ENCODE measurements at regions of chr13 and their contacts with region 1.

Region 1: GRCh38 chr13:108895220-108895704 is 265.9 kb downstream of the MYO16 start:
- DNase-seq: peak in 1 of 2 experiments; percentile 56
- ATAC-seq: peak; percentile 43; a peak in 2 of 6 replicates
- H3K4me3 ChIP-seq: no peak overlapping the region
- H3K27ac ChIP-seq: 0 out of 6 replicates have a peak overlapping the region, but pooled peaks of 1 of the 2 experiments have one; percentile 14
- H3K4me1 ChIP-seq: peaks cover 4% of the 10 kb centered on the region; the same call in 1 of the 3 replicates
- CTCF ChIP-seq: peak; percentile 67
- EP300 ChIP-seq: no peak
- POLR2A ChIP-seq: no peak
- RAD21 ChIP-seq: peak; percentile 74 to 83

Region 2: GRCh38 chr13:108322206-108322824 is 572.9 kb before region 1 on chr13:
- CTCF ChIA-PET with region 1: interaction called, 26 read pairs
- POLR2A ChIA-PET with region 1: no interaction called
- DNase-seq: peak; percentile 4 to 27
- ATAC-seq: peak; percentile 77 to 86; a peak in 5 of 6 replicates
- H3K4me3 ChIP-seq: no peak overlapping the region
- H3K27ac ChIP-seq: no peak overlapping the region
- H3K4me1 ChIP-seq: no peaks in the 10 kb centered on the region
- CTCF ChIP-seq: peak; percentile 71
- EP300 ChIP-seq: no peak
- POLR2A ChIP-seq: no peak
- RAD21 ChIP-seq: peak; percentile 67 to 74

Region 3: GRCh38 chr13:108508263-108508662 is 387.0 kb before region 1 on chr13:
- CTCF ChIA-PET with region 1: interaction called, 14 read pairs
- POLR2A ChIA-PET with region 1: no interaction called
- DNase-seq: peak; percentile 10 to 26
- ATAC-seq: peak; percentile 49 to 56; a peak in 1 of 6 replicates
- H3K4me3 ChIP-seq: no peak overlapping the region
- H3K27ac ChIP-seq: no peak overlapping the region
- H3K4me1 ChIP-seq: no peaks in the 10 kb centered on the region
- CTCF ChIP-seq: peak; percentile 48
- EP300 ChIP-seq: no peak
- POLR2A ChIP-seq: no peak
- RAD21 ChIP-seq: peak; percentile 50 to 63

Region 4: DNA sequence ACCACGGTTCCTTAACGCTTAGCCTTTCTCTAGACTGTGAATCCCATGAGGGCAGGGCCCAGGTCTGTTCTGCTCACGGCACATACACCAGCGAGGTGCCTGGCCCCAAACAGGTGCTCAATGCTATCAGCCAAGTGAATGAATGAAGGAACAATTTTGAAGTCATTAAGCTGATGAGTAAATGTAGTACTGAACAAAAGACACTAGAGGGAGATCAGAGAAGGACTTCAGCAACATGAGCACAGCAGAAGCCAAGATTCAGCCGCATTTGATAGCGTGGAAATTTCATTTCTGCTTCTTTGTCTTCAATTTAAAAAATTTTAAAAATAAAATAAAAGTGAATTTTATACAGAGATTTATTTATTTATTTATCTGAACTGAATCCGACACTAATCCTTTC is 285.9 kb before region 1 on chr13:
- CTCF ChIA-PET with region 1: interaction called, 41 read pairs
- POLR2A ChIA-PET with region 1: no interaction called
- DNase-seq: peak; percentile 6 to 31
- ATAC-seq: peak in 1 of 2 experiments; percentile 54; a peak in 2 of 6 replicates
- H3K4me3 ChIP-seq: no peak overlapping the region
- H3K27ac ChIP-seq: no peak overlapping the region
- H3K4me1 ChIP-seq: no peaks in the 10 kb centered on the region
- CTCF ChIP-seq: peak; percentile 49
- EP300 ChIP-seq: no peak
- POLR2A ChIP-seq: no peak
- RAD21 ChIP-seq: peak; percentile 62

Region 5: DNA sequence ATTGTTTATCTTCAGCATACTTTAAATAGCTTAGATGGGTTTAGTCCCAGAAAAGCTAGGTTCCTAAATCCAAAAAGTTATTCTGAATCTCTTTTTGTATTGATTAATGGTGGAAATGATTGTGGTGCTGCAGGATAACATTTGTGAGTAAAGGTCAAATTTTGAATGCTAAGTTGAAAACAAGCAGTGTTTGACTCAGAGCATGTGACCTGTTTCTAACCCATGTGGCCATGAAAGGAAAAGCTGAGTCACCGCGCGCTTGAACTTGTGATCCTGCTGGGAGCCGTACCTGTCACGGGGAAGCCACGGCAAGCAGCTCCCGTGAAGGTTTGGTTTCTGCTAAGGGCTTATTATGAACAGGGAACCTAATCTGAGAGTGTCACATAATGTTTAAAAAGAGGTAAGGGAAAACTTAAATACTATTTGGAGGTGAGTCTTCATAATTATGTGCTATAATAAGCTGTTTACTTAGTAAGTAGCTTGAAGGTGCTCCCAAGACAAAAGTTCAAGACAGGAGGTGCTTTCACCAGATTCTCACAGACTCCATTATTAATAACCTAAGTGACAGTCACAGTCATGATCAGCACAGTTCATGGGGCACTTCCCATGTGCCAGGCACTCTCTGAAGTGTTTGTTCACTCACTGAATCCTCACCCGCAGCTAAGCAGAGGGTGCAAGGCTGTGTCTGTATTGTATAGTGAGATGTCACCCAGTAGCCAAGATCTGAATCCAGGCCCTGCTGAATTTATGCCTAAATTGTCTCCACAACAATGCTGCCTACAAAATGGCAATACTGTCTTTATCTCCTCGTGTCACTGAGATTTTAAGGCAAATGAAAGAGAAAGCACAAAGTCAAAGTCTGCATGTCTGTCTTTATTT is 20.6 kb after region 1 on chr13:
- CTCF ChIA-PET with region 1: interaction called, 18 read pairs
- POLR2A ChIA-PET with region 1: no interaction called
- DNase-seq: peak; percentile 67 to 92
- ATAC-seq: peak; percentile 90 to 92
- H3K4me3 ChIP-seq: peak overlapping the region; percentile 19; the same call in 2 of the 3 replicates
- H3K27ac ChIP-seq: peak overlapping the region; percentile 80 to 86
- H3K4me1 ChIP-seq: peaks cover 38% of the 10 kb centered on the region
- CTCF ChIP-seq: no peak
- EP300 ChIP-seq: 0 out of 5 replicates have a peak, but pooled peaks of 1 of the 2 experiments have one; percentile 45
- POLR2A ChIP-seq: no peak
- RAD21 ChIP-seq: no peak

Region 6: GRCh38 chr13:109087916-109088623 is 192.8 kb after region 1 on chr13:
- CTCF ChIA-PET with region 1: no interaction called
- POLR2A ChIA-PET with region 1: no interaction called
- DNase-seq: no peak
- ATAC-seq: no peak
- H3K4me3 ChIP-seq: no peak overlapping the region
- H3K27ac ChIP-seq: no peak overlapping the region
- H3K4me1 ChIP-seq: no peaks in the 10 kb centered on the region
- CTCF ChIP-seq: no peak
- EP300 ChIP-seq: no peak
- POLR2A ChIP-seq: no peak
- RAD21 ChIP-seq: no peak

Region 7: DNA sequence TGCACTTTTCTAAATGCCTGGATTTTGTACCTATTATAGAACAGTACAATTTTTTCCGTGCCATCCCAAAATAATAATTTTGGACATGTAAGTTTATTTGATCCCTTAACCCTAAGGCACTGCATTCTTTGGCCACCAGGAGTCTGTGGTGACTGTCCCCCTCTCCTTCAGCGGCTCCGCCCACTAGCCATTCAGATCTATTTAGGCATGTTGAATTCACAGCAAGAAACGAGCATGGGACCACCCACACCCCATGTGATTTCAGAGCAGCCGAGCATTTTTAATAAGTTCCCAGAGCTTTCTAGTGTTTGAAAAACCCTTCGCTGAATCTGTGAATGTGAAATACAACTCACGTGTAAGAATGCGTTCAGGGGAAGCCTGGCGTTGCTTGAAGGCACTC is 301.7 kb after region 1 on chr13:
- CTCF ChIA-PET with region 1: no interaction called
- POLR2A ChIA-PET with region 1: no interaction called
- DNase-seq: peak in 1 of 2 experiments; percentile 18
- ATAC-seq: peak in 1 of 2 experiments; percentile 63; a peak in 3 of 6 replicates
- H3K4me3 ChIP-seq: no peak overlapping the region
- H3K27ac ChIP-seq: no peak overlapping the region
- H3K4me1 ChIP-seq: peaks cover 16% of the 10 kb centered on the region; the same call in 2 of the 3 replicates
- CTCF ChIP-seq: no peak
- EP300 ChIP-seq: no peak
- POLR2A ChIP-seq: no peak
- RAD21 ChIP-seq: no peak

Measured in A549 (cell line).